HepG2 (cell line): ENCODE measurements at regions of chr5 and their contacts with region 1.

Region 1: DNA sequence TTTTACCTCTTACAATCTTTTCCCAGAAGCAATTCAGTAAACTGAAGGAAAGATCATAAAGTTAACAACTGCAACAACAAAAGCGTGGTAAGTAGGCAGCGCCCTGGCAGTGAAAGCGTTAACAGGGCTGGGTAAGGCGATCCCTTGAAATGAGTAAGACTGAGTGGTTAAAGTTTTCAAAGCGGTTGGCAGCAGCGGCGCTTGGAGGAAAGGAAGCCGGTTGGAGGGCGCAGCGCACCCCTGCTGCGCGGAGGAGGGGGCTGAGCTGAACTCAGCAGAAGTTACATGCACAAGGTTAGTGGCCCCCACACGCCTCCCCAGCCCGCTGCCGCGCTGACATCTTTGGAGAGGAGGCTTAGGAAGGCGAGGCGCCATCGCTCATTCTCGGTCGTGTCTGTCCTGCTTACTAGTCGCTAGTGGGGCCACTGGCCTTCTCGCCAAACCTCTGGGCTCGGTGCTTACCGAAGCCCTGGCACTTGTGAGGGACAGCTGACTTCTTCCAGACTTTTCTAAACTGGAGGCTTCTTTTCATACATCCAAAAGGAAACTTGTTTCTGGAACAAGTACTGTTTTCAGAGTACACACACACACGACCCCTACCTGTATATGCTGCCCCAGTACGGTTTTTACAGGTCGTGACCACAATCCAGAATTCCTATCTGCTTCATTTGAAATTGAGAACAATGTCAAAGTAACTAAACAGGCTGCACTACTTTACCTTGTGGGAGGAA is at the start of gene SH3RF2:
- DNase-seq: peak; percentile 67
- ATAC-seq: peak; percentile 86
- H3K4me3 ChIP-seq: peak within 1 kb of the TSS; percentile 57 to 76 (median 67)
- H3K27ac ChIP-seq: peak within 1 kb of the TSS; percentile 51
- H3K4me1 ChIP-seq: peaks cover 65% of the 10 kb centered on the region
- H3K27me3 ChIP-seq: no peaks in the 10 kb centered on the region
- CTCF ChIP-seq: peak; percentile 16; the same call in 1 of the 2 replicates
- EP300 ChIP-seq: no peak
- POLR2A ChIP-seq: peak; percentile 31 to 59; a peak in 3 of 4 replicates
- RAD21 ChIP-seq: no peak; the same call in 1 of the 2 replicates
- total RNA-seq, gene SH3RF2: 3.1 and 3.7 TPM in 2 replicates

Region 2: GRCh38 chr5:145834917-145835847 is 101.4 kb before region 1 on chr5 and contains the start of gene PRELID2:
- CTCF ChIA-PET with region 1: no interaction called
- POLR2A ChIA-PET with region 1: interaction called, 3 read pairs
- in situ Hi-C with region 1: no loop called
- intact Hi-C with region 1: loop called (anchors 5 kb)
- DNase-seq: peak; percentile 89
- ATAC-seq: peak; percentile 98
- H3K4me3 ChIP-seq: peak within 1 kb of the TSS; percentile 72 to 77 (median 74)
- H3K27ac ChIP-seq: peak within 1 kb of the TSS; percentile 79
- H3K4me1 ChIP-seq: peaks cover 67% of the 10 kb centered on the region
- H3K27me3 ChIP-seq: no peaks in the 10 kb centered on the region; a peak in 1 of 5 replicates
- CTCF ChIP-seq: peak; percentile 65
- EP300 ChIP-seq: no peak
- POLR2A ChIP-seq: peak; percentile 74 to 89
- RAD21 ChIP-seq: peak; percentile 77
- total RNA-seq, gene PRELID2: 20.3 and 22.9 TPM in 2 replicates

Region 3: DNA sequence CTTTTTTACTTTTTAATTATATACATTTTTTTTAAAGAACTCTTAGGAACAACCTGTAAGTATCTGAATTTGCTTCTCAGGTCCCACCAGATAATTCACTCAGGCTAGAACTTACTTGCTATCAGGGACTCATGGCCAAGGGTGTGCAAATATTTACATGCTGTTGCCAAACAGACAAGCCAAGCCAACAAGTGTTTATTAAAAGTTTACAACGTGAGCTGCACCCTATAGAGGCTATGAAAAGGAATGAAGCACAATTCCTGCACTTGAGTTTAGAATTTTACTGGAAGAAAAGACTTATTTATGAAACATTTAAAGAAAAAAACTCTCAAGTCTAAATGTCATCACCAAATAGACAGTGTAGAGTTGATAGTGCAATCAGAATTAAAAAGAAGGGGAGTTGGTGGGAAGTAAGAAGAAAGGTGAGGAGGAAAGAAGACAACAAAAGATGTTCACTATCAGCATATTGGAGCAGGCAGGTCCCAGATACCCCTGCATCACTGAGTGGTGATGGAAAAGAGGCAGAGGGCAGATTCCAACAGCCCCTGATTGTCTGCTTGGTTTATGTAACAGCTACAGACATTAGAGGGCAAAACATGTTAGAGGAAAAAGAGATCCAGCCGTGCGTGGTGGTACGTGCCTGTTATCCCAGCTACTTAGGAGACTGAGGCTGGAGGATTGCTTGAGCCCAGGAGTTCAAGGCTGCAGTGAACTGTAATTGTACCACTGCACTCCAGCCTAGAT is 32.6 kb after region 1 on chr5:
- CTCF ChIA-PET with region 1: no interaction called
- POLR2A ChIA-PET with region 1: no interaction called
- in situ Hi-C with region 1: no loop called
- intact Hi-C with region 1: loop called (anchors 2 kb)
- DNase-seq: peak; percentile 36
- ATAC-seq: peak; percentile 92
- H3K4me3 ChIP-seq: no peak overlapping the region
- H3K27ac ChIP-seq: no peak overlapping the region
- H3K4me1 ChIP-seq: peaks cover 45% of the 10 kb centered on the region
- H3K27me3 ChIP-seq: no peaks in the 10 kb centered on the region
- CTCF ChIP-seq: no peak
- EP300 ChIP-seq: peak in 1 of 2 experiments; percentile 29; a peak in 1 of 4 replicates
- POLR2A ChIP-seq: no peak
- RAD21 ChIP-seq: no peak

Region 4: DNA sequence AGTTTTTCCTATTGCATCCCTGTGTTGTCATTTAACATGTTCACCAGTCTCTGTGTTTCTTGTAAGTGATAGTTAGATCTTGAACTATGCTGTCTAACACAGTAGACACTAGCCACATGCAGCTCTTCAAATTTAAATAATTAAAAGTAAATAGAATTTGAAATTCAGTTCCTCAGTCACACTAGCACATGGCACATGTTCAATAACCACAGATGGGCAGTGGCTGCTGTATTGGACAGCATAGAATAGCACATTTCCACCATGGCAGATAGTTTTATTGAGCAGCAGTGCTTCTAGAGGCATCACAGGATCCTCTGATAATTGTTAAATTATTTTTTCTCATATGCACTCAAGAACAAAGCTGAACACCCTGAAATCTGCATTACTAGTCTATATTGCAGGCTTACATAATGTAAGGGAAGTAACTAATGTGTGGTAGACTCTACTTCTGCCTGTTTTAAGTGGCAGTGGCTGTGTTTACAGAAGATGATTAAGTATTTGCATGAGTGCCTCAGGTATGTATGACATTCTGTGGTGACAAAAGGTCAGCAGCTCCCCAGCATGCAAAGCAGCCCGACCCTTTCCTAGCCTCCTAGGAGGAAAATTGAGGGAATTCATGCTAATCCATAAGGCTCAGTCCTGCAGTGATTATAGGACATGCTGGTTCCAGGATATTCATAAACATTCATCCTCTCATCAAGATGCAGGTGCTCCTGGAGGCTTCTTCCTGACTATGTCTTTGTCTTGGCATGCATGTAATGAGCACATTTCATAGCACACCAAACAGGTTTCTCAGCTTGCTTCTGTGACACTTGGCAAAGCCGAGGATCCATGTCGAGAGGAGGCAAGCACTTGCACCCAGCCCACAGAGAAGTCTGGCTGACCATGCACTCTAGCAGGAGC is 45.3 kb after region 1 on chr5:
- CTCF ChIA-PET with region 1: no interaction called
- POLR2A ChIA-PET with region 1: interaction called, 19 read pairs
- in situ Hi-C with region 1: loop called (anchors 5 kb)
- intact Hi-C with region 1: loop called (anchors 2 kb)
- DNase-seq: peak; percentile 79
- ATAC-seq: peak; percentile 39
- H3K4me3 ChIP-seq: no peak overlapping the region; a peak in 1 of 6 replicates
- H3K27ac ChIP-seq: peak overlapping the region; percentile 24
- H3K4me1 ChIP-seq: peaks cover 72% of the 10 kb centered on the region
- H3K27me3 ChIP-seq: no peaks in the 10 kb centered on the region
- CTCF ChIP-seq: no peak
- EP300 ChIP-seq: peak in 1 of 2 experiments; percentile 83; a peak in 2 of 4 replicates
- POLR2A ChIP-seq: no peak
- RAD21 ChIP-seq: no peak

Region 5: DNA sequence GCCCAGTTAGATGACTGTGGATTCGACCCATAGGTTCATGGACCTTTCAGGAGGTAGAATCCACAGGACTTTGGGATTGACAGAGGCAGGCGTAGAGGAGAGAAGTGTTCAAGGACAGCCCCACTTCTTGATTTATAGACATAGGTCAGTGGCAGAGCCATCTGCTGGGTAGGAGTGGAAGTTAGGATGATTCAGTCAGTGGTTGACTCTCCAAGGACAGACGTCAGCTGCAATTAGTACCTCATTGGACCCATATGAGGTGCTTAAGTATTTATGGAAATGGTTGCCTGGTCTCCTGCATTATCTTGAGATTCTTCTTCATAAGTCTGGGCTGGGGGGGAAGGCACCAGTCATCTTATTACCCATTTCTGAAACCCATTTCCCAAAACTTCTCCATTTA is 70.7 kb after region 1 on chr5:
- CTCF ChIA-PET with region 1: no interaction called
- POLR2A ChIA-PET with region 1: interaction called, 3 read pairs
- in situ Hi-C with region 1: no loop called
- intact Hi-C with region 1: loop called (anchors 1 kb)
- DNase-seq: peak; percentile 34
- ATAC-seq: peak; percentile 92
- H3K4me3 ChIP-seq: no peak overlapping the region
- H3K27ac ChIP-seq: no peak overlapping the region
- H3K4me1 ChIP-seq: peaks cover 16% of the 10 kb centered on the region
- H3K27me3 ChIP-seq: no peaks in the 10 kb centered on the region
- CTCF ChIP-seq: peak; percentile 54
- EP300 ChIP-seq: no peak
- POLR2A ChIP-seq: no peak
- RAD21 ChIP-seq: peak; percentile 56; the same call in 1 of the 2 replicates

Region 6: GRCh38 chr5:146027751-146028150 is 91.2 kb after region 1 on chr5:
- CTCF ChIA-PET with region 1: no interaction called
- POLR2A ChIA-PET with region 1: interaction called, 3 read pairs
- in situ Hi-C with region 1: no loop called
- intact Hi-C with region 1: loop called (anchors 5 kb)
- DNase-seq: no peak
- ATAC-seq: no peak
- H3K4me3 ChIP-seq: no peak overlapping the region
- H3K27ac ChIP-seq: no peak overlapping the region
- H3K4me1 ChIP-seq: peaks cover 24% of the 10 kb centered on the region
- H3K27me3 ChIP-seq: no peaks in the 10 kb centered on the region
- CTCF ChIP-seq: no peak
- EP300 ChIP-seq: no peak
- POLR2A ChIP-seq: no peak
- RAD21 ChIP-seq: no peak

Region 7: DNA sequence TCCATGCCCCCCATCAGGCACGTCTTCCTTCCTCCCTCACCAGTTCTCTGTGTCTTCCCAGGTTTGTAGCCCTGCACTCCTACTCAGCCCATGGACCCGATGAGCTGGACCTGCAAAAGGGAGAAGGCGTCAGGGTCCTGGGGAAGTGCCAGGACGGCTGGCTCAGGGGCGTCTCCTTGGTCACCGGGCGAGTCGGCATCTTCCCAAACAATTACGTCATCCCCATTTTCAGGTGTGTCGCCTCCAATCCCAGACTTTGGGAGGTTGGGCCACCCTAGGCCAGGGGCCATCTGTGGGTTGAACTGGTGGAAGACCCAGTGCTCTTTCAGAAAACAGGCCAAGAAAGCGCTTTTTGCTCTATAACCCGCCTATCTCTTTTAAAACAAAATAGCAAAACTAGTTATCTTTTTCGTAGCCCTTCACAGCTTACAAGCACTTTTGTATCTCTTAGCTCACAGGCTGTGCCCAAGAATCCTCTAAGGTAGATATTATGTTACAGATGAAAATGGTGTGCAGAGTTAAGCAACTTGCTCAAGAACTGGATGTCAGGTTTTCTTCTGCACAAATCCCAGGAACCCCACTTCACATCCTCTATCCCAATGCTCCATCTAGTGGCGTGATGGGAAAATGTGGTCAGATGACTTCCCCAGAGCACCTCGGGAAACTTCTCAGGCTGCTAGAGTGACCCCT is 112.6 kb after region 1 on chr5:
- CTCF ChIA-PET with region 1: no interaction called
- POLR2A ChIA-PET with region 1: no interaction called
- in situ Hi-C with region 1: no loop called
- intact Hi-C with region 1: loop called (anchors 2 kb)
- DNase-seq: peak; percentile 66
- ATAC-seq: peak; percentile 92
- H3K4me3 ChIP-seq: no peak overlapping the region
- H3K27ac ChIP-seq: no peak overlapping the region
- H3K4me1 ChIP-seq: no peaks in the 10 kb centered on the region
- H3K27me3 ChIP-seq: no peaks in the 10 kb centered on the region
- CTCF ChIP-seq: peak; percentile 83
- EP300 ChIP-seq: no peak
- POLR2A ChIP-seq: no peak
- RAD21 ChIP-seq: peak; percentile 84

Region 8: DNA sequence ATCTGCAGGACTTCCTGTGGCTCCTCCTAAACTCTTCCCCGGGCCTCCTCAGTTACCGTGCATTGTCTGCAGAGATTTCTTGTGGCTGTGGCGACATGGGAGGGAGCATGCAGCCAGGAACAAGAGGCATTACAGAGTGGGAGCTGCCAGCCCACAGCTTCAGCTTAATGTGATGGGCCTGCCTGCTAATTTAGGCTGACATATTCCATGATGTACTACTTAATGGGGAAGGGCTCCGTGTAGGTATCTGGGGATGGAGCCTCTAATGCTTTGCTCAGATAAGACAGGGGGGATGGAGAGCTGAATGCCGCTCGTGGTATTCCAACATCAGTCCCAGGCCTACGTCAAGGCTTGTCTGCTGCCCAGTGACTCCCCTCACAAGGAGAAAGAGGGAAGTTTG is 717.0 kb after region 1 on chr5:
- CTCF ChIA-PET with region 1: no interaction called
- POLR2A ChIA-PET with region 1: no interaction called
- in situ Hi-C with region 1: no loop called
- intact Hi-C with region 1: no loop called
- DNase-seq: no peak
- ATAC-seq: no peak
- H3K4me3 ChIP-seq: no peak overlapping the region
- H3K27ac ChIP-seq: no peak overlapping the region
- H3K4me1 ChIP-seq: no peaks in the 10 kb centered on the region
- H3K27me3 ChIP-seq: no peaks in the 10 kb centered on the region; a peak in 1 of 5 replicates
- CTCF ChIP-seq: no peak
- EP300 ChIP-seq: no peak
- POLR2A ChIP-seq: no peak
- RAD21 ChIP-seq: no peak